ENCODE measurements at regions of chr10 and their contacts with region 1.

Region 1: DNA sequence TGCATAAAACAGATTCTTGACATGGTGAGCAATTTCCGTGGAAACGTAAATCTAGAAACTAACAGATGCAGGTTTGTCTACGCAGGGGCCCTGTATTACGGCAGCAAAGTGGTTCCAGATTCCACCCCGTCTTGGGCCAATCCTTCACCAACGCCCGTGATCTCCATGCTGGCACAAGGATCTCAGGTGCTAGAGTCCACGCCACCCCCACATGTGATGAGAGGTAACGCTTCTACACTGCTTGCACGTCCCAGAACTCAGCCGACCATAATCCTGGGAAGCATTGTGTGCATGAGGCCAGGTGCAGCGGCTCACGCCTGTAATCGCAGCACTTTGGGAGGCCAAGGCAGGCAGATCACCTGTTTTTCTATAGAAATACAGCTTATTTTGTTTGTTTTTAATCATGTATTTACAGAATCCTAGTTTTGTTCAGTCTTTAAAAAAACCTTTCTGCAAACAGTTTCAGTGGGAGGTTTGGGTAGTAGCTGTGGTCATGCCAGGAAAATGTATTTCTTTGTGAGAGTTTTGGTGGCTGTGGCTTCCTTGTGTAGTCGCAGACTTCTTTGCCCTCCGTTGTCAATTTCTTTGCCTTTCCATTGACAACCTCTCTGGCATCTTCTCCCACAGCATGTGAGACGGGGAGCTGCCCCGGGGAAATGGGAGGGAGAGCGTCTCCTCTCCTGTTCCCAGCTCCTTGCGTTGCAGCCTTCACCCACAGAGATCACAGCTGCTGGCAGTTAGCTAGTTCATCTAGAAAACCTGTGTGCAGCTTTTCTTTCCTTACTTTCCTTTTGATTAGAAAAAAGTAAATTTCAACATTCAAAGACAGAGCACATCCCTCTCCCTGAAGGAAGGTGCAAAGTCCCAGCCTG is 35.7 kb downstream of the ITIH2 start:
- DNase-seq: no peak
- ATAC-seq: peak in 2 of 4 donors; percentile 29 to 32
- H3K4me3 ChIP-seq: no peak overlapping the region
- H3K27ac ChIP-seq: no peak overlapping the region
- H3K4me1 ChIP-seq: no peaks in the 10 kb centered on the region
- H3K27me3 ChIP-seq: no peaks in the 10 kb centered on the region
- CTCF ChIP-seq: no peak

Region 2: GRCh38 chr10:7665767-7666166 is 73.0 kb before region 1 on chr10:
- intact Hi-C with region 1: no loop called
- DNase-seq: no peak
- ATAC-seq: peak in 1 of 4 donors; percentile 15
- H3K4me3 ChIP-seq: peak overlapping the region; percentile 68
- H3K27ac ChIP-seq: no peak overlapping the region
- H3K4me1 ChIP-seq: peaks cover 15% of the 10 kb centered on the region
- H3K27me3 ChIP-seq: peaks cover 0 to 73% (median 15%) of the 10 kb centered on the region in 3 donors
- CTCF ChIP-seq: no peak

Region 3: GRCh38 chr10:8146650-8147049 is 407.9 kb after region 1 on chr10:
- intact Hi-C with region 1: no loop called
- DNase-seq: no peak
- ATAC-seq: no peak
- H3K4me3 ChIP-seq: no peak overlapping the region
- H3K27ac ChIP-seq: no peak overlapping the region
- H3K4me1 ChIP-seq: no peaks in the 10 kb centered on the region
- H3K27me3 ChIP-seq: no peaks in the 10 kb centered on the region
- CTCF ChIP-seq: no peak

Region 4: GRCh38 chr10:8269976-8270375 is 531.2 kb after region 1 on chr10:
- intact Hi-C with region 1: loop called in 1 of 2 experiments (anchors 10 kb)
- DNase-seq: no peak
- ATAC-seq: no peak
- H3K4me3 ChIP-seq: no peak overlapping the region
- H3K27ac ChIP-seq: no peak overlapping the region
- H3K4me1 ChIP-seq: no peaks in the 10 kb centered on the region
- H3K27me3 ChIP-seq: no peaks in the 10 kb centered on the region
- CTCF ChIP-seq: no peak

Measured in psoas muscle (tissue), 8 donors.